IMR-90 (cell line): ENCODE measurements at regions of chr9 and their contacts with region 1.

Region 1: DNA sequence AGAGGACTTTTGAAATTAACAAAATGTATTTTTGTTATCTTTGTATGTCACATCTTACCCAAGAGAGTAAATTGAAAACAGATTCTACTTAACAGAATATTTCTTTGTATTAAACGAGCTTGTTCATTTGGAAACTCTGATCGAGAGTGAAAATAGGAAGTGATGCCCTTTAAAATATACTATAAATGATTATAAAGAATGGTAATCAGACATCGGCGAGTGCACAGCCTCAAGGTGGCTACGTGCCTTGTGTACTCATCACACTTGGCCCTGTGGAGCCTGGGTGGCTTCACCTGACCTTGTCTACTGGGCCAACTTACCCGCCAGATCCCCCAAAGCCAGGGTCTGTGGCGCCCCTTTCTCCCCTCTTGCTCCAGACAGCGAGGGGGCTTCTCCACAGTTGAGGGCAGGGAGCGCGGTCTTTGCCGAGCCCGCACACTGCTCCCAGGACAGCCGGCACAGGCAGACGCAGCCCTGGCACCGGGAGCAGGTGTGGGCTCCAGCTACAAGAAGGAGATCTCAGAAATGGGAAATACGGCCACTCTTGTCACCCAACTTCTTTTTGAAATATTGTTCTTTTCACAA is 243.2 kb downstream of the CEMIP2 start:
- DNase-seq: no peak
- ATAC-seq: no peak
- H3K4me3 ChIP-seq: no peak overlapping the region
- H3K27ac ChIP-seq: no peak overlapping the region
- H3K4me1 ChIP-seq: no peaks in the 10 kb centered on the region
- H3K27me3 ChIP-seq: no peaks in the 10 kb centered on the region
- CTCF ChIP-seq: no peak
- POLR2A ChIP-seq: no peak
- RAD21 ChIP-seq: no peak

Region 2: DNA sequence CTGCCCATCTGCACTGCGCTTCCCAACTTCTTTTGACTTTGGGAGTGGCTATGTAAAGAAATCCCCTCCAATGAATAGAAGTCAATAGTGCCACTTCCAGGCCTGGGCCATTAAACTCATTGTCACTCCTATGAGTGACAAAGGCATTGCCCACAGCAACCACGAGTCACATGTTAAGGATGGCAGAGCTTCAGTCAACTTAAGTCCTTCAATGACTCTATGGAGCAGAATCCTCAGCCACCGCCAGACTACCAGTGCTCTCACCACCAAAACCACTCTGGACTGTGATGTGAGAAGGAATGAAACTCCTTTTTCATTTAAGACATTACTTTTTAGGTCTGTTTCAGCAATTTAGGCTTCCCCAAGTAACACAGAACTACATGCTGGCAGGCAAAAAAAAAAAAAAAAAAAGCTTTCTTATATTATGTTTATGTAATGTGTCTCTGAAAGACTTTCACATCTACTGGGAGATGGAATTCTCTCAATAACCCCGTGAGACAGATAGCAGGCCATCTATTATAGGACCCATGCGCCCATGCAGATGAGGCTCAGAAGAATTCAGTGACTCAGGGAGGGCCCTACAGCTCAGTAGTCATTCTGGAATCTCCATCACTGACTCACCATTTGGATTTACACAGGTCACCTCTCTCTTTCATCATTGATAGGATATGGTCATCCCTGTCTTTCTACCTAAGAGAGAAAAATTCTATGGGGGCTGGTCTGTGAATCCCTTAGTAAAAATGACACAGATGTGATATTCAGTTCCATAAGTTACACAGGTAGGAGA is 62.7 kb after region 1 on chr9:
- CTCF ChIA-PET with region 1: no interaction called
- POLR2A ChIA-PET with region 1: no interaction called
- dilution Hi-C with region 1: no loop called
- in situ Hi-C with region 1: no loop called
- intact Hi-C with region 1: loop called (anchors 10 kb)
- DNase-seq: peak; percentile 53
- ATAC-seq: peak; percentile 35; the same call in 1 of the 2 replicates
- H3K4me3 ChIP-seq: no peak overlapping the region
- H3K27ac ChIP-seq: no peak overlapping the region
- H3K4me1 ChIP-seq: no peaks in the 10 kb centered on the region
- H3K27me3 ChIP-seq: peaks cover 1% of the 10 kb centered on the region; the same call in 1 of the 2 replicates
- CTCF ChIP-seq: no peak
- POLR2A ChIP-seq: no peak
- RAD21 ChIP-seq: no peak

Region 3: DNA sequence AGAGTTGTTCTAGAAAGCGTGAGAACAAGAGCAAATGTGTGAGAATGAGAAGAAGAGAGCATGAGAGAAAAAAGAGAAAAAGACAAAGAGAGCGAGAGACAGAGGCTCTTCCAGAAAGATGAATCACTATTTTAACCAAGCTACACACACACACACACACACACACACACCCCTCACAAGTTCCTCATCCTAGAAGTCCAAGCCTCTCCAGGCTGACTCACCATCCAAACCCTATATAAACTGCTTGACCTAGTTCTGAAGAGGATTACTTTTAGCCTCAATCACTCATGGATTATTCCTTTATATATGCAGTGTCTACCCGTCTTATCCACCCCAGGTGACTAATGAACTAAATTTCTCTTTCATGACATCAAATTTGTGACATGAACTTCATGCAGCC is 497.8 kb after region 1 on chr9:
- CTCF ChIA-PET with region 1: no interaction called
- POLR2A ChIA-PET with region 1: no interaction called
- dilution Hi-C with region 1: no loop called
- in situ Hi-C with region 1: no loop called
- intact Hi-C with region 1: no loop called
- DNase-seq: peak; percentile 85
- ATAC-seq: peak; percentile 84
- H3K4me3 ChIP-seq: no peak overlapping the region
- H3K27ac ChIP-seq: no peak overlapping the region
- H3K4me1 ChIP-seq: no peaks in the 10 kb centered on the region
- H3K27me3 ChIP-seq: no peaks in the 10 kb centered on the region
- CTCF ChIP-seq: no peak
- POLR2A ChIP-seq: no peak
- RAD21 ChIP-seq: no peak